Activated CD8-positive, alpha-beta T cell treated with anti-CD3 and anti-CD28 coated beads, Interleukin-2, amount 10 ng/mL, durations not matched to agents 7 days and 5 days (primary cell): ENCODE measurements at regions of chr17 and their contacts with region 1.

Region 1: DNA sequence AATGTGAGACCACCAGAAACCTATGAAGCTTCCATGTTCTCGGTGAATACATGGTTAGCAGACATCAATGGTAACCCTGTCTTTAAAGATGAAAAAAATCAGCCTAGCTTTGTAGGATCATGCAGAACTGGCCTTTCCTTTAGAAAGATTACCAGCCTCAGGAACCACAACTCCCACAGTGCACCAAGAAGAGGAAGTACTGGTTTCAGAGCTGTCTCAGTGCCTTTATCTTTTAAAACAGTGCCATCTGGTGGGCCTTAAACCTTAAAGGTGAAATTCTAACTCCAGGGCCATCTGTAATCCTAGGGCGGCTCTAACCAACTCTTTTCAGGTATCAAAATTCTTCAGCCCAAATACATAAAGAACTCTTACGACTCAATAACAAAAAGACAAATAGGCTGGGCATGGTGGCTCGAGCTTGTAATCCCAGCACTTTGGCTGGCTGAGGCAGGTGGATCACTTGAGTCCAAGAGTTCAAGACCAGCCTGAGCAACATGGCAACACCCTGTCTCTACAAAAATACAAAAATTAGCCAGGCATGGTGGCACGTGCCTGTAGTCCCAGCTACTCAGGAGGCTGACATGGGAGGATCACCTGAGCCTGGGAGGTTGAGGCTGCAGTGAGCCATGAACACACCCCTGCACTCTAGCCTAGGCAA is 5.4 kb downstream of the ATPAF2 start:
- DNase-seq: peak; percentile 81
- ATAC-seq: peak; percentile 89
- H3K4me3 Mint-ChIP-seq: no peak overlapping the region
- H3K27ac Mint-ChIP-seq: no peak overlapping the region
- H3K4me1 Mint-ChIP-seq: peaks cover 34% of the 10 kb centered on the region
- H3K27me3 Mint-ChIP-seq: no peaks in the 10 kb centered on the region

Region 2: GRCh38 chr17:17681187-17681848 is 352.3 kb before region 1 on chr17 and contains the start of gene RAI1:
- CTCF ChIA-PET with region 1: interaction called, 16 read pairs
- POLR2A ChIA-PET with region 1: no interaction called
- DNase-seq: peak; percentile 76
- ATAC-seq: peak; percentile 69
- H3K4me3 Mint-ChIP-seq: peak within 1 kb of the TSS; percentile 87
- H3K27ac Mint-ChIP-seq: peak within 1 kb of the TSS; percentile 92
- H3K4me1 Mint-ChIP-seq: peaks cover 48% of the 10 kb centered on the region
- H3K27me3 Mint-ChIP-seq: peaks cover 8% of the 10 kb centered on the region
- total RNA-seq, gene RAI1: 24.4 to 24.6 TPM

Region 3: DNA sequence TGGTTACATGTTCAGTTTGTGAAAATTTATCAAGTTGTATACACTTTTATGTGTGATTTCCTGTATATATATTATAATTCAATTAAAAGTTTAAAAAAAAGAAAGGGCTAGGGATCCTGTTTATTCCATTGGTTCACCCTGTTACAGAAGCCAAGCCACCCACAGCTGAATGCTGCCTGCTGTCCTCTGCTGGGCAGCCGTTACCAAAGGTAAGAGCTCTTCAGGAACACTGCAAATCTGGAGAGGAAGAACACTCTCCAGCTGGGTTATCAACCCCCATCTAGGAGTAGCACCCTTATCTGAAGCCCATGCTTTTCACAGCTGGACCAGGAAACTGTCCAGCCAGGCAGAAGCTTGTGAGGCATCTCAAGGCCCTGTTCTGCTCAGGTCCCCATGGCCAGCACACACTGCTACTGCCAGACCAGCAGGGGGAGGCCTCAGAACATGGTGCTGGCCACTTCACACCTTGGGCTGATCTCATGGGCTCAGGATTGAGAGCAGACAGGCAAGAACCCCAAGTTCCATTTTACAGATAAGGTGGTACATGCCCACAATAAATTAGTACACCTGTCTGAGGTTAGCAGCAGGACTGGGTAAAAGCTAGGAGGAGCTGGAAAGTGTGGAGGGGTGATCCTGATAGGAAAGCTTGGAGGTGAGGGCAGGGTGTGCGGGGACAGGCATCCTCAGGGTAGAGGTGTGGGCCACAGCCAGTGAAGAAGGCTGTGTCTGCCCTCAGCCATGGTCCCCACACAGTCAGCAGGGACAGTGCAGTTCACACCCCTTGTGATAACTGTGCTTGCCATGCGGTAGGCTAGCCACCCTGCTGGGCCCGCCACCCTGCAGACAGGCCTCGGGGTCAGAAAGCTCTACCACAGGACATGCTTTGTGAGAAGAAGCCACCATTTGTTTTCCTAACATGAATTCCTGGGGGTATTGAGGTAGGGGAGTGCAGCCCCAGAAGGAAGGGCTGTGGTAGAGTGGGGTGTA is 142.5 kb before region 1 on chr17:
- CTCF ChIA-PET with region 1: interaction called, 32 read pairs
- POLR2A ChIA-PET with region 1: no interaction called
- DNase-seq: peak; percentile 58
- ATAC-seq: peak; percentile 81
- H3K4me3 Mint-ChIP-seq: no peak overlapping the region
- H3K27ac Mint-ChIP-seq: no peak overlapping the region
- H3K4me1 Mint-ChIP-seq: peaks cover 7% of the 10 kb centered on the region
- H3K27me3 Mint-ChIP-seq: no peaks in the 10 kb centered on the region

Region 4: DNA sequence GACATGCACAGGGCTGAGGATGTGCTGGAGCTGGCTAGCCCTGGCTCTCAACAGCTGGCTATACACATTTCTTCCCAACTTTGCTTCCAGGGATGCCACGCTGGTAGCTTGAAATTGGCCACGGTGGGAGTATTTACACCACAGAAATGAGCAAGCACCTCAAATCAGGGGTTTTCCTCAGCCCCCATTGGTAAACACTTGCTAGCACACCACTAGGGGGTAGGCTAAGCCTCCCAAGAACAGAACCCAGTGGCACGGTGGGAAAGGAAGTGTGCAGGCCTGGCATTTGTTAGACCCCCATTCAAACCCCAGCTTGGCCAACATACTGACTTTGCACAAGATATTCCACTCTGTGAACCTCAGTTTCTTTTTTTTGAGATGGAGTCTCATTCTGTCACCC is 48.0 kb before region 1 on chr17:
- CTCF ChIA-PET with region 1: interaction called, 16 read pairs
- POLR2A ChIA-PET with region 1: no interaction called
- DNase-seq: peak; percentile 27
- ATAC-seq: no peak
- H3K4me3 Mint-ChIP-seq: no peak overlapping the region
- H3K27ac Mint-ChIP-seq: no peak overlapping the region
- H3K4me1 Mint-ChIP-seq: no peaks in the 10 kb centered on the region
- H3K27me3 Mint-ChIP-seq: no peaks in the 10 kb centered on the region